SK-N-SH (cell line): ENCODE measurements at regions of chr6 and their contacts with region 1.

Region 1: DNA sequence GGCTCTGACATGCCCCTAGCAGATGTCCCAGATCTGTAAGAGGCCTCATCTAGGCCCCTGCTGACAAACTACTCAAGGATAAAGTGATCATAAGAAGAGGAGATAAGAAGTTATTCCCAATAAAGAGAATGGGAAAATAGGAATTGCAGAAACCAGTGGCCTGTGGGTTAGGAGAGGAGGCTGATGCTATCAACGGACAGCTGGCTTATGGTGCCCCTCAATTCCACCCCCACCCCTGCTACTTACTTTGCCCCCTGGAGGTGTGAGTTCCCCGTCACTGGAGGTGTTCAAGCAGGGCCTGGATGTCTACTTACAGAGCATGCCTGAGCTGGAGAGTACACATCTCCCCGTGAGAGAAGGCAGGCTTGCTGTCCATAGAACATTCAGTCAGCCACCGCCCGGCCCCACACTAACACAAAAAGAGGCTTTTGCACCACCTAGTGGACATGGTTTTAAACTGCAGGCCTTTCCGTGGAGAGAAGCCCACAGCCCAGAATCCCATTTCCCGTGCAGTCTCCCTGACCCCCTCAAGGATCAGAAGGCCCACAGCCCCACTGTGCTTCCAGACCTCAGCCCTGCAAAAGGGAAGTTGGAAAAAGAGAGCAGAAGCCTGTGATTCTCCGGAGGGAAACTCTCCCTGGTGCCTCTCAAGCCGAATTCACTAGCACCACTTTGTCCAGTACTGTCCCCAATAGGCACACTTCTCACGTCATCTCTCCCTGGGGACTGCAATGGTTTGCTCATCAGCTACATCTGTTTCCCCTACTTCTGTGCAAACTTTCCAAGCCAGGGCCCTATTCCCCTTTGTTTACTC is 23.8 kb upstream of the BNIP5 start:
- DNase-seq: peak; percentile 87
- H3K4me3 ChIP-seq: peak overlapping the region in 1 of 2 experiments; percentile 40; a peak in 1 of 4 replicates
- H3K27ac ChIP-seq: no peak overlapping the region
- H3K4me1 ChIP-seq: peaks cover 2 to 6% of the 10 kb centered on the region in 2 experiments; a peak in 2 of 4 replicates
- H3K27me3 ChIP-seq: no peaks in the 10 kb centered on the region
- CTCF ChIP-seq: peak; percentile 79
- EP300 ChIP-seq: no peak
- RAD21 ChIP-seq: peak; percentile 94

Region 2: GRCh38 chr6:36145495-36145894 is 215.0 kb before region 1 on chr6:
- CTCF ChIA-PET with region 1: no interaction called
- POLR2A ChIA-PET with region 1: no interaction called
- DNase-seq: no peak
- H3K4me3 ChIP-seq: no peak overlapping the region
- H3K27ac ChIP-seq: no peak overlapping the region
- H3K4me1 ChIP-seq: no peaks in the 10 kb centered on the region
- H3K27me3 ChIP-seq: no peaks in the 10 kb centered on the region
- CTCF ChIP-seq: no peak
- EP300 ChIP-seq: no peak
- RAD21 ChIP-seq: no peak

Region 3: GRCh38 chr6:36309203-36309602 is 51.2 kb before region 1 on chr6:
- CTCF ChIA-PET with region 1: interaction called, 149 read pairs
- POLR2A ChIA-PET with region 1: no interaction called
- DNase-seq: no peak
- H3K4me3 ChIP-seq: no peak overlapping the region
- H3K27ac ChIP-seq: no peak overlapping the region
- H3K4me1 ChIP-seq: peaks cover 0 to 2% of the 10 kb centered on the region in 2 experiments; a peak in 1 of 4 replicates
- H3K27me3 ChIP-seq: peaks cover 12% of the 10 kb centered on the region; the same call in 1 of the 2 replicates
- CTCF ChIP-seq: no peak
- EP300 ChIP-seq: no peak
- RAD21 ChIP-seq: no peak

Region 4: DNA sequence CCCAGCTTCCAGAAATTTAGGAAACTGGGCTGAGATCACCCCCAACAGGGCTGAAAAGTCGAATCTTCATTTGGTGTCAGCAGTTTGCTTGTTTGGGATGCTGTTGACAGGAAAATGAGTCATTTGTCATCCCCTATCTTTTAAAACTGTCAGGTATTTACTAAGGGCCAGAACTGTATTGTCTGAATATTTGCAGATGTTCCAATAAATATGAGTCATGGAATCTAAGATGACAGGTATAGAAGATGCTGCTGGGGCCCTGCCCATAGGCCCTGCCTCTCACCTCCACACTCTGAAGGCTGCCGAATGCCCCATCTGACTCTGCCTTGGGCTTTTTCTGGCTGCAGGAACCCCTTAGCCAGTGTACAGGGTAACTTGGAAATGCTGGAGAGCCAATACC is 23.2 kb after region 1 on chr6:
- CTCF ChIA-PET with region 1: interaction called, 26 read pairs
- POLR2A ChIA-PET with region 1: no interaction called
- DNase-seq: no peak
- H3K4me3 ChIP-seq: no peak overlapping the region
- H3K27ac ChIP-seq: no peak overlapping the region
- H3K4me1 ChIP-seq: peaks cover 0 to 14% of the 10 kb centered on the region in 2 experiments; a peak in 1 of 4 replicates
- H3K27me3 ChIP-seq: no peaks in the 10 kb centered on the region
- CTCF ChIP-seq: no peak
- EP300 ChIP-seq: no peak
- RAD21 ChIP-seq: no peak

Region 5: GRCh38 chr6:36615018-36615761 is 254.7 kb after region 1 on chr6:
- CTCF ChIA-PET with region 1: no interaction called
- POLR2A ChIA-PET with region 1: no interaction called
- DNase-seq: peak; percentile 49
- H3K4me3 ChIP-seq: no peak overlapping the region; a peak in 1 of 4 replicates
- H3K27ac ChIP-seq: peak overlapping the region; percentile 28 to 36; a peak in 2 of 4 replicates
- H3K4me1 ChIP-seq: peaks cover 15 to 23% of the 10 kb centered on the region in 2 experiments; a peak in 3 of 4 replicates
- H3K27me3 ChIP-seq: no peaks in the 10 kb centered on the region
- CTCF ChIP-seq: peak; percentile 86
- EP300 ChIP-seq: 0 out of 4 replicates have a peak, but pooled peaks of 1 of the 2 experiments have one; percentile 4
- RAD21 ChIP-seq: peak; percentile 85